Activated B cell treated with CpG ODN at 0.5 μM for 24 hours (primary cell): ENCODE measurements at regions of chr11 and their contacts with region 1.

Region 1: DNA sequence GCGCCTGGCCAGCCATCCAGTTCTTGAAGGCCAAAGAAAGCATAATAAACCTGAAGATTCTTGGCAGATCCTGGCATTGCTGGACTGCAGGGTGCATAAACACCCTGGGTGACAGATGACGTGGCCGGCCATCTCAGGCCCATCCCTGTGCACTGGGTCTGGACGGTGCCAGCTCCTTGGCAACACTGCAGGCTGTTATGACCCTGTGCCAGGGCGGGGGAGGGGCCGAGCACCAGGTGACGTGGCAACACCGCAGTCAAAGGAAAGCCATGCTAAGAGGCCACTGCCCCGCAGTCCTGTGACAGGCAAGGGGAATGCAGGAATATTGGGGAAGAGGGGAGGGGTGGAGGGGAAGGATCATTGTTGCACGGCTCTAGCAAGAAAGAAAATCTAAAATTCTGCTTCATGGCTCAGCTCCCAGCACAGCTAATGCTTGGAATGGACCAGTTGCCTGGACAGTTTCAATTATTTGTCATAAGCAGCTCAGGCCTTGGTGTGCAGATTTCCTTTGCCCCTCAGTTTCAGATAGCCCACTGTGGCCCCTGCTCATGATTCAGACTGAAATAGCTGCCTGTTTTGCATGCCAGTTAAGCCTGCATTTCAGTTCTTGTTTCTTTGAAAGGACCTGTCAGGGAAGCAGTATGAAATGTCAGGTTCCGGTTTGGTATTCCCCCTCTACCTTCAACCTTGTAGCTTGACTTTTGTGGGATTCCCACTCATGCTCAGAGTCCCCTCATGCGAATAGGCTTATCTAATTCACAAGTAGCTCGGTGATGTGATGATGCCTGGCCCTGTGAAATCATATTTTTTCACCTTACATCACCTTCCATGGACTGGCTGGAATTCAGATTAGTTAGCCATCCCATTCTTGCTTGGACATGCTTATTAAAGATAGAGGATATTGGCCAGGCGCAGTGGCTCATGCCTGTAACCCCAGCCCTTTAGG is 29.7 kb upstream of the DDX6 start:
- DNase-seq: peak; percentile 51
- ATAC-seq: peak; percentile 85
- H3K4me3 Mint-ChIP-seq: peak overlapping the region; percentile 77
- H3K27ac Mint-ChIP-seq: peak overlapping the region; percentile 97
- H3K4me1 Mint-ChIP-seq: peaks cover 73% of the 10 kb centered on the region
- H3K27me3 Mint-ChIP-seq: no peaks in the 10 kb centered on the region
- CTCF ChIP-seq: no peak

Region 2: DNA sequence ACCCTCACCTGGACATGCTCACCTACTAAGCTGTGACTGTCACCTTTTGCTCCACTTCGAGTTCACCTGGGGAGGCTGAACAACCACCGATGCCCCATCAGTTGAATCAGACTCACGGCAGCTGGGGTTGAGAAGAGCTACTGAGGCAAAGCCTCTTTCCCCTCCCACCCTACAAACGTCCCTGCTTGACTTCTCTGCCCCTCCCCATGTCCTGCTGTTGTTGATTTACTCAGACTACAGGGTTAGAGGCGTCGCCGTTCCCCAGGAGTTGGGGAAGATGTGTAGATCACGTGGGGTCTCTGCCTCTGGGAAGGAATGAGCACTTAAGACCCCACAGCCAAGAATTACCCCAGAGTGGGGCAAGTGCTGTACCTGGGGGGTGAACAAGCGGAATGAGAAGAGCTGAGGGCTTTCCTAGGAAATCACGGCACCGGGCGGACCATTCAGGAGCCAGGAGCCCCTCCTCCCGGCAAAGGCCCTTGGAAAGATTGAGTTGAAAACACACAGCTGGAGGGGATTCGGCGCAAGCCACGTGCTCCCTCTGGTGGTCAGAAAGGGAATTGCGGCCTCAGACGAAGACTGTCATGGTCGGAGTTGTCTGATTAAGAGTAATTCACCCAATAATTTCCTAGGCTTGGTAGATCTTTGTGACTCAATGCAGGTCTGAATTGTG is 1003.2 kb before region 1 on chr11:
- CTCF ChIA-PET with region 1: no interaction called
- POLR2A ChIA-PET with region 1: no interaction called
- intact Hi-C with region 1: no loop called
- DNase-seq: peak; percentile 81
- ATAC-seq: peak; percentile 17
- H3K4me3 Mint-ChIP-seq: peak overlapping the region; percentile 88
- H3K27ac Mint-ChIP-seq: peak overlapping the region; percentile 97
- H3K4me1 Mint-ChIP-seq: peaks cover 75% of the 10 kb centered on the region
- H3K27me3 Mint-ChIP-seq: peaks cover 3% of the 10 kb centered on the region
- CTCF ChIP-seq: peak; percentile 80

Region 3: GRCh38 chr11:118838905-118839553 is 18.3 kb after region 1 on chr11:
- CTCF ChIA-PET with region 1: interaction called, 5 read pairs
- POLR2A ChIA-PET with region 1: interaction called, 223 read pairs
- intact Hi-C with region 1: loop called (anchors 1 kb)
- DNase-seq: no peak
- ATAC-seq: peak; percentile 78
- H3K4me3 Mint-ChIP-seq: peak overlapping the region; percentile 47
- H3K27ac Mint-ChIP-seq: peak overlapping the region; percentile 85
- H3K4me1 Mint-ChIP-seq: peaks cover 61% of the 10 kb centered on the region
- H3K27me3 Mint-ChIP-seq: no peaks in the 10 kb centered on the region
- CTCF ChIP-seq: no peak

Region 4: DNA sequence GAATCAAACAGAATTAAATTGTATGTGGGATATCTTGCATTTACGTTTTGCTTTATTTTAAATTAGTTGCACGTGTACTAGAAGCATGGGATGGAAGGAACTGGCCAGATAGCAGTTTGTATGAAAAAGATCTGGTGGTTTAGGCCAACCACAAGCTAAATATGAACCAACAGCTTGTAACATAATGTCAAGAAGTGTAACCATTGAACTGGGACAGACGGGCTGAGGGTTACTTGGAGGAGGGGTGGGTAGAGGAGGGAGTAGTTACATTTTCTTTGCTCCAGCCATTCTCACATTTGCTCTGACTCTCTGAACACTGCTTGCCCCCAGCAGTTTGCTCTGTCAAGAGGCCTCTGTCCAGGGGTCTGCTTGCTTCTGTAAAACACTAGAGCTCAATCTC is 31.3 kb after region 1 on chr11:
- CTCF ChIA-PET with region 1: no interaction called
- POLR2A ChIA-PET with region 1: interaction called, 30 read pairs
- intact Hi-C with region 1: no loop called
- DNase-seq: no peak
- ATAC-seq: peak; percentile 87
- H3K4me3 Mint-ChIP-seq: peak overlapping the region; percentile 55
- H3K27ac Mint-ChIP-seq: peak overlapping the region; percentile 64
- H3K4me1 Mint-ChIP-seq: peaks cover 42% of the 10 kb centered on the region
- H3K27me3 Mint-ChIP-seq: no peaks in the 10 kb centered on the region
- CTCF ChIP-seq: no peak

Region 5: DNA sequence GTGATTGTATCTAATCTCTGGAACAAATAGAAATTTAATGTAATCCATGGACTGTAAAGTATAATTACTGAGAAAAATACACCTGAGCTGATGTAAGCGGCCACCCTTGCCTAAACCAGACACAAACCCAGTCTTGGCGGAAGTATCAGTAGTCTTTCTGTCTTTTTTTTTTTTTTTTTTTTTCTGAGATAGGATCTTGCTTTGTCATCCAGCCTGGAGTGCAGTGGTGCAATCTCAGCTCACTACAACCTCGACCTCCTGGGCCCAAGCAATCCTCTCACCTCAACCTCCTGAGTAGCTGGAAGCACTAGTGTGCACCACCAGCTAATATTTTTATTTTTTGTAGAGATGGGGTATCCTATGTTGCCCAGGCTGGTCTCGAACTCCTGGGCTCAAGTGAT is 57.5 kb after region 1 on chr11:
- CTCF ChIA-PET with region 1: interaction called, 48 read pairs
- POLR2A ChIA-PET with region 1: interaction called, 182 read pairs
- intact Hi-C with region 1: loop called (anchors 1 kb)
- DNase-seq: no peak
- ATAC-seq: no peak
- H3K4me3 Mint-ChIP-seq: no peak overlapping the region
- H3K27ac Mint-ChIP-seq: peak overlapping the region; percentile 89
- H3K4me1 Mint-ChIP-seq: peaks cover 89% of the 10 kb centered on the region
- H3K27me3 Mint-ChIP-seq: no peaks in the 10 kb centered on the region
- CTCF ChIP-seq: no peak